Stomach (tissue), 19 donors: ENCODE measurements at regions of chr3 and their contacts with region 1.

Region 1: DNA sequence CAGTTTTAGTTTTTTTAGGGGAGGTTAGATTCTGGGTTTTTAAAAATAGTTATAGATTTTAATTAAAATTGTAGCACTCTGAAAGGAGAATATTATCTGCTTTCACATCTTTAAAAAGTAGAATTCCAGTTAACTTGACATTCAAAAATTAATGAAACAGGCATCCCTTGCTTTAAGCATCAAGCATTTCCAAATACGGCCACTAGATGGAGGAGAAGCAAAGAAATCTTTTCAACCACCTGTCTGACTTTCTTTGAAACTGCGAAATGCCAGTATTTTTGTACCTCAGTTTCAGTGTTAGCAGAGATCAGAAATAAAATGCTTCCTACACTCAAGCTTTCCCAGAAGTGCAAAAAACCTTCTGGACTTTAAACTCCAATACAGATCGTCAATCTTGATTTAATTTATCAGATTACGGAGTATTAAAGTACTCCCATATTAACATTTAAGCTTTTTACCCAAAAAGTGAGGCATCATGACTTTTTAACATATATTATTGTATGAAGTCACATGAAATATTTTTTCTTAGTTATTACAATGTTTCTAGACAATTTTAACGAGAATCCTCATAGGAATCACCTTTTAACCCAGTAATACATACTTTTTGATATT is 153.3 kb downstream of the P3H2 start:
- DNase-seq: peak in 1 of 2 donors; percentile 82
- H3K4me3 ChIP-seq: no peak overlapping the region
- H3K27ac ChIP-seq: no peak overlapping the region
- H3K4me1 ChIP-seq: no peaks in the 10 kb centered on the region
- H3K27me3 ChIP-seq: no peaks in the 10 kb centered on the region
- CTCF ChIP-seq: peak in 5 of 7 experiments; percentile 57 to 88 (median 81)
- EP300 ChIP-seq: no peak
- POLR2A ChIP-seq: no peak

Region 2: GRCh38 chr3:190205739-190206138 is 238.4 kb after region 1 on chr3:
- intact Hi-C with region 1: loop called (anchors 5 kb)
- DNase-seq: no peak
- H3K4me3 ChIP-seq: no peak overlapping the region
- H3K27ac ChIP-seq: no peak overlapping the region
- H3K4me1 ChIP-seq: peaks cover 0 to 10% (median 4%) of the 10 kb centered on the region in 4 donors
- H3K27me3 ChIP-seq: no peaks in the 10 kb centered on the region
- CTCF ChIP-seq: no peak
- EP300 ChIP-seq: no peak
- POLR2A ChIP-seq: no peak